K562 (cell line): ENCODE measurements at regions of chr17 and their contacts with region 1.

Region 1: DNA sequence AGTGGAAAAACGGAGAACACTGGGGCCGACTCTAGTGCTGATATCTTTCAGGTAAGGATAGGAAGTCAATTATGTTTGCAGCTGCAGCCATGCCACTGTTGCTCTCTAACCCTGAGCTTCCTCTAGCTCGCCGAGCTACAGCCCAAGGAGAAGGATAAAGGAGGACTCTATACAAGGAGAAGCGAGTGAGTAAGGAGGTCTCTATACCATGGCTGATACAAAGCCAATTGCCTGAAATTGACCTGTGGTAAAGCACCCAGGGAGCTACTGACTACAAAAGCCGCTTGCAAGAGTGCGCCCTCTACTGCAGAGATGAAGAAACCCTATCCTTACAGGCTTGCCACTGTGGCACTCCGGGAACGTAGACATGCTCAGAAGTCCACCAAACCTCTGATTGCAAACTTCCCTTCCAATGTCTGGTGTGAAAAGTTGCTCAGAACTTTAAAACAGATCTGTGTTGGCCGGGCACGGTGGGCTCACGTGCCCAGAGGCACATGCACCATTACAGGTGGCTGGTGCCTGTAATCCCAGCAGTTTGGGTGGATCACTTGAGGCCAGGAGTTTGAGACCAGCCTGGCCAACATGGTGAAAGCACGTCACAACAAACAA is 10.8 kb upstream of the SLC46A1 start:
- DNase-seq: peak; percentile 55 to 78 (median 62)
- ATAC-seq: peak; percentile 99
- H3K4me3 ChIP-seq: no peak overlapping the region
- H3K27ac ChIP-seq: no peak overlapping the region
- H3K4me1 ChIP-seq: no peaks in the 10 kb centered on the region; a peak in 2 of 5 replicates
- H3K27me3 ChIP-seq: peaks cover 20 to 33% of the 10 kb centered on the region in 2 experiments
- CTCF ChIP-seq: peak; percentile 75 to 85 (median 78)
- EP300 ChIP-seq: no peak
- POLR2A ChIP-seq: no peak
- RAD21 ChIP-seq: peak; percentile 33 to 73; a peak in 3 of 4 replicates

Region 2: GRCh38 chr17:28384281-28385036 is 32.3 kb before region 1 on chr17:
- CTCF ChIA-PET with region 1: interaction called, 3 read pairs
- POLR2A ChIA-PET with region 1: no interaction called
- in situ Hi-C with region 1: no loop called
- intact Hi-C with region 1: loop called (anchors 5 kb)
- DNase-seq: peak in 2 of 4 experiments; percentile 35 to 42
- ATAC-seq: peak; percentile 80
- H3K4me3 ChIP-seq: peak overlapping the region; percentile 27
- H3K27ac ChIP-seq: no peak overlapping the region; the same call in 2 of the 3 replicates
- H3K4me1 ChIP-seq: peaks cover 3 to 21% of the 10 kb centered on the region in 2 experiments; a peak in 4 of 5 replicates
- H3K27me3 ChIP-seq: peaks cover 11 to 44% of the 10 kb centered on the region in 2 experiments; a peak in 3 of 5 replicates
- CTCF ChIP-seq: no peak
- EP300 ChIP-seq: no peak
- POLR2A ChIP-seq: no peak
- RAD21 ChIP-seq: no peak